IMR-90 (cell line): ENCODE measurements at regions of chr2 and their contacts with region 1.

Region 1: GRCh38 chr2:197113275-197113711 is 186.8 kb upstream of the PGAP1 start:
- DNase-seq: peak; percentile 45
- ATAC-seq: peak; percentile 56; the same call in 1 of the 2 replicates
- H3K4me3 ChIP-seq: no peak overlapping the region
- H3K27ac ChIP-seq: no peak overlapping the region
- H3K4me1 ChIP-seq: peaks cover 4% of the 10 kb centered on the region
- H3K27me3 ChIP-seq: no peaks in the 10 kb centered on the region
- CTCF ChIP-seq: peak; percentile 68
- POLR2A ChIP-seq: no peak
- RAD21 ChIP-seq: peak; percentile 67

Region 2: GRCh38 chr2:196849895-196850294 is 263.4 kb before region 1 on chr2:
- CTCF ChIA-PET with region 1: no interaction called
- POLR2A ChIA-PET with region 1: no interaction called
- dilution Hi-C with region 1: no loop called
- in situ Hi-C with region 1: no loop called
- intact Hi-C with region 1: loop called (anchors 10 kb)
- DNase-seq: peak; percentile 45
- ATAC-seq: peak; percentile 89
- H3K4me3 ChIP-seq: no peak overlapping the region
- H3K27ac ChIP-seq: no peak overlapping the region
- H3K4me1 ChIP-seq: no peaks in the 10 kb centered on the region
- H3K27me3 ChIP-seq: no peaks in the 10 kb centered on the region
- CTCF ChIP-seq: peak; percentile 48
- POLR2A ChIP-seq: no peak
- RAD21 ChIP-seq: peak; percentile 58

Region 3: GRCh38 chr2:197011799-197012641 is 101.3 kb before region 1 on chr2:
- CTCF ChIA-PET with region 1: no interaction called
- POLR2A ChIA-PET with region 1: no interaction called
- dilution Hi-C with region 1: no loop called
- in situ Hi-C with region 1: no loop called
- intact Hi-C with region 1: loop called (anchors 5 kb)
- DNase-seq: peak; percentile 53
- ATAC-seq: peak; percentile 74
- H3K4me3 ChIP-seq: no peak overlapping the region
- H3K27ac ChIP-seq: no peak overlapping the region
- H3K4me1 ChIP-seq: no peaks in the 10 kb centered on the region
- H3K27me3 ChIP-seq: no peaks in the 10 kb centered on the region
- CTCF ChIP-seq: peak; percentile 74
- POLR2A ChIP-seq: no peak
- RAD21 ChIP-seq: peak; percentile 76

Region 4: GRCh38 chr2:197159661-197160211 is 46.4 kb after region 1 on chr2:
- CTCF ChIA-PET with region 1: interaction called, 13 read pairs
- POLR2A ChIA-PET with region 1: no interaction called
- dilution Hi-C with region 1: no loop called
- in situ Hi-C with region 1: no loop called
- intact Hi-C with region 1: no loop called
- DNase-seq: peak; percentile 85
- ATAC-seq: peak; percentile 79
- H3K4me3 ChIP-seq: no peak overlapping the region
- H3K27ac ChIP-seq: no peak overlapping the region
- H3K4me1 ChIP-seq: peaks cover 10% of the 10 kb centered on the region
- H3K27me3 ChIP-seq: no peaks in the 10 kb centered on the region
- CTCF ChIP-seq: no peak
- POLR2A ChIP-seq: no peak
- RAD21 ChIP-seq: no peak

Region 5: GRCh38 chr2:197191177-197191939 is 78.1 kb after region 1 on chr2:
- CTCF ChIA-PET with region 1: interaction called, 17 read pairs
- POLR2A ChIA-PET with region 1: no interaction called
- dilution Hi-C with region 1: no loop called
- in situ Hi-C with region 1: no loop called
- intact Hi-C with region 1: loop called (anchors 5 kb)
- DNase-seq: peak; percentile 28
- ATAC-seq: 0 out of 2 replicates have a peak, but pooled peaks have one; percentile 48
- H3K4me3 ChIP-seq: no peak overlapping the region
- H3K27ac ChIP-seq: no peak overlapping the region
- H3K4me1 ChIP-seq: no peaks in the 10 kb centered on the region
- H3K27me3 ChIP-seq: no peaks in the 10 kb centered on the region
- CTCF ChIP-seq: peak; percentile 66
- POLR2A ChIP-seq: no peak
- RAD21 ChIP-seq: peak; percentile 69

Region 6: DNA sequence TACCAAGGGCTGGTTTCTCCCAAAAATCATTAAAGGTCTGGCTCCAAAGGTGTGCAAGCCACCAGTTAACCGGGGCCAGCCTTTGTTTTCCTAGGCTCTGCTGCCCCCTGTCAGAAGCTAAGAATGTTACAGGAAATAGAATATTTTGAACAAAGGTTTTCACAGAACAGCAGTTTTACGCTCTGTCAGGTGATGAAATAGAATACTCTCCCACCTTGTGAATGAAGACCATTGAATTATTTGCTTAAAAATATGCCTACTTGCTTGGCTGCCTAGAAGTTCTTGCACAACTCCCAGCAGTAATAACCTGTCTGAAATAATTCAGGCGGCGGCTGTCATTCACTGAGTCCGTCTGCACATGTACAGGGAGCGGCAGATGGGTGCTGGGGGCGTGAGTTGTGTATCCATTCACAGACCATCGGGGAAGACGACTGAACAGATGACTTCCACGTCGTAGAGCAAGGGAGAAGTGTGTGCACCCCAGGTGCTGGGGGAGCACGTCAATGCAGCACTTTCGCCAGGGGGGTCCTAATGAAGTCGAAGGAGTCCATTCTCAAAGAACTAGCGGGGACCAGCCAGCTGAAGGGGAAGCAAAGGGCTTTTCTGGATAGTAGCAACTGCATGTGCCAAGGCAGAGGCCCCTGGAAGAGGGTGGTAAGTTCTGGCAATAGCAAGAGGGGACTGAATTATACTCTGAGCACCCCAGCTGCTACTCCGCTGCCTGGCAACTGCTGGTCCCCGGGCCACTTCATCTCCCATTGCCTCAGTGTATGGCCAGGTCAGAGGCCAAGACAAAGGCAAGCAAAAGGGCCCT is 265.4 kb after region 1 on chr2:
- CTCF ChIA-PET with region 1: interaction called, 5 read pairs
- POLR2A ChIA-PET with region 1: no interaction called
- dilution Hi-C with region 1: no loop called
- in situ Hi-C with region 1: loop called (anchors 5 kb)
- intact Hi-C with region 1: loop called (anchors 1 kb)
- DNase-seq: peak; percentile 44
- ATAC-seq: peak; percentile 77
- H3K4me3 ChIP-seq: no peak overlapping the region
- H3K27ac ChIP-seq: no peak overlapping the region
- H3K4me1 ChIP-seq: peaks cover 5% of the 10 kb centered on the region
- H3K27me3 ChIP-seq: no peaks in the 10 kb centered on the region; the same call in 1 of the 2 replicates
- CTCF ChIP-seq: peak; percentile 81
- POLR2A ChIP-seq: no peak
- RAD21 ChIP-seq: peak; percentile 94